HepG2 (cell line): ENCODE measurements at regions of chr6 and their contacts with region 1.

Region 1: DNA sequence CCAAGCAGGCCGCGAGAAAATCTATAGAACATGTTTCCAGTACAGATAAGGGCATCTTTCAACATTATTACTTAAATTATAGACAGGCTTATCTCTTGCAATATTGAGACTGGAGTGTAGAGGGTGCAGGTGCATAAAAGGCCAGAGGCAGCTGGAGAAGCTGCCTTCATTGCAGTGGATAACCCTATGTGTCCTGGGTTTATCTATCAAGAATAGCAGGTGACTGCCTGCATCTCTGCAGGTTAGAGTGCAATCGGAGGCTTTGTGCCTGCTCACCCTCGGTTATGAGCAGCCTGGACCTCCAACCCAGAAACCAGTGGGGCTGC is 28.7 kb upstream of the ECI2 start:
- DNase-seq: no peak
- ATAC-seq: peak; percentile 75
- H3K4me3 ChIP-seq: no peak overlapping the region
- H3K27ac ChIP-seq: no peak overlapping the region
- H3K4me1 ChIP-seq: peaks cover 27% of the 10 kb centered on the region
- H3K27me3 ChIP-seq: peaks cover 0 to 27% of the 10 kb centered on the region in 2 experiments; a peak in 3 of 5 replicates
- CTCF ChIP-seq: 0 out of 2 replicates have a peak, but pooled peaks have one; percentile 26
- EP300 ChIP-seq: no peak
- POLR2A ChIP-seq: no peak
- RAD21 ChIP-seq: no peak

Region 2: GRCh38 chr6:4030669-4031068 is 133.4 kb before region 1 on chr6:
- CTCF ChIA-PET with region 1: no interaction called
- POLR2A ChIA-PET with region 1: no interaction called
- in situ Hi-C with region 1: no loop called
- intact Hi-C with region 1: no loop called
- DNase-seq: no peak
- ATAC-seq: no peak
- H3K4me3 ChIP-seq: no peak overlapping the region
- H3K27ac ChIP-seq: no peak overlapping the region
- H3K4me1 ChIP-seq: peaks cover 39% of the 10 kb centered on the region
- H3K27me3 ChIP-seq: no peaks in the 10 kb centered on the region
- CTCF ChIP-seq: no peak
- EP300 ChIP-seq: no peak
- POLR2A ChIP-seq: no peak
- RAD21 ChIP-seq: no peak

Region 3: GRCh38 chr6:4210629-4211423 is 46.7 kb after region 1 on chr6:
- CTCF ChIA-PET with region 1: no interaction called
- POLR2A ChIA-PET with region 1: no interaction called
- in situ Hi-C with region 1: no loop called
- intact Hi-C with region 1: loop called (anchors 5 kb)
- DNase-seq: peak; percentile 48
- ATAC-seq: peak; percentile 98
- H3K4me3 ChIP-seq: no peak overlapping the region
- H3K27ac ChIP-seq: no peak overlapping the region
- H3K4me1 ChIP-seq: no peaks in the 10 kb centered on the region
- H3K27me3 ChIP-seq: peaks cover 0 to 6% of the 10 kb centered on the region in 2 experiments; a peak in 2 of 5 replicates
- CTCF ChIP-seq: peak; percentile 81
- EP300 ChIP-seq: no peak
- POLR2A ChIP-seq: no peak
- RAD21 ChIP-seq: peak; percentile 56